WTC11 (cell line): ENCODE measurements at regions of chr20 and their contacts with region 1.

Region 1: DNA sequence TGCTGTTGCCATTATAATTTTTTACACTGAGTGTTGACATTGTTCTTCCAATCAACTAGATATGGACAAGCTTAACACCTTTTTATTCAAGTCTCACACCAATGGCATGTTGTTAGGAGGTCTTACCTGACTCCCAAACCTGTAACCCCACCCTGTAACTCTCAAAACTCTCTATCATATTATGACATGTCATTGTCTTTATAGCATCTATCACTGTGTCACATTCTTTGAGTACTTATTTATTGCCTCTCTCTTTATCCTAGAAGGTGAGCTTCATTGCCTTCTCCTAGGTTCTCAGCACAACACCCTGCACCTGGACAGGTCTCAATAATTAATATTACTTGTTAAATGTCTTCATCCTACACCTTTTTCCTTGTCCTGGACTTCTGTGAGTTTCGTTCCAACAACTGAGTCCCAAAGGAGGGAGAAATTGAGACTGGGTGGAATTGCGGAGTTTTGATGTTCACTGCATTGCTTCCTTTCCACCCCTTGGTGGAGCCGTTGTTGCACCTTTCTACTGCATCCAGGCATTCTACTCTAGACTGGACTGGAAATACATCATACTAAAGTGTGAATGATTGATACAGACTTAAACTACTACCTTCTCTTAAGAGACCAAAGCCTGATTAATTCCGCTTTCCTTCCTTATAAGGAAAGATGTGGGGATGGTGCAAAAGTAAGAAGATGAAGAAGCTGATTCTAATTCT is 338.0 kb upstream of the CHD6 start:
- DNase-seq: peak; percentile 29
- ATAC-seq: peak; percentile 88
- H3K4me3 Mint-ChIP-seq: no peak overlapping the region
- H3K27ac Mint-ChIP-seq: no peak overlapping the region
- H3K4me1 Mint-ChIP-seq: no peaks in the 10 kb centered on the region; the same call in 1 of the 2 replicates
- H3K27me3 Mint-ChIP-seq: no peaks in the 10 kb centered on the region; the same call in 1 of the 2 replicates
- CTCF ChIP-seq: peak; percentile 53; the same call in 1 of the 2 replicates

Region 2: GRCh38 chr20:42018951-42019350 is 62.8 kb after region 1 on chr20:
- CTCF ChIA-PET with region 1: interaction called, 12 read pairs
- POLR2A ChIA-PET with region 1: no interaction called
- DNase-seq: peak; percentile 40
- ATAC-seq: peak; percentile 84
- H3K4me3 Mint-ChIP-seq: no peak overlapping the region
- H3K27ac Mint-ChIP-seq: no peak overlapping the region
- H3K4me1 Mint-ChIP-seq: no peaks in the 10 kb centered on the region
- H3K27me3 Mint-ChIP-seq: no peaks in the 10 kb centered on the region
- CTCF ChIP-seq: 0 out of 2 replicates have a peak, but pooled peaks have one; percentile 20

Region 3: GRCh38 chr20:42082611-42083010 is 126.5 kb after region 1 on chr20:
- CTCF ChIA-PET with region 1: no interaction called
- POLR2A ChIA-PET with region 1: no interaction called
- DNase-seq: no peak
- ATAC-seq: no peak
- H3K4me3 Mint-ChIP-seq: no peak overlapping the region
- H3K27ac Mint-ChIP-seq: no peak overlapping the region
- H3K4me1 Mint-ChIP-seq: 0 out of 2 replicates have a peak, but pooled peaks cover 2% of the 10 kb centered on the region
- H3K27me3 Mint-ChIP-seq: no peaks in the 10 kb centered on the region
- CTCF ChIP-seq: no peak